A673 (cell line): ENCODE measurements at regions of chr9 and their contacts with region 1.

Region 1: GRCh38 chr9:113785334-113785733 is 90.8 kb upstream of the ZNF618 start:
- DNase-seq: no peak
- H3K4me3 ChIP-seq: no peak overlapping the region
- H3K27ac ChIP-seq: no peak overlapping the region
- H3K4me1 ChIP-seq: peaks cover 3% of the 10 kb centered on the region
- H3K27me3 ChIP-seq: no peaks in the 10 kb centered on the region
- CTCF ChIP-seq: no peak

Region 2: GRCh38 chr9:113492343-113493212 is 292.8 kb before region 1 on chr9:
- CTCF ChIA-PET with region 1: no interaction called
- POLR2A ChIA-PET with region 1: no interaction called
- intact Hi-C with region 1: no loop called
- DNase-seq: peak; percentile 96
- H3K4me3 ChIP-seq: peak overlapping the region; percentile 7
- H3K27ac ChIP-seq: peak overlapping the region; percentile 49
- H3K4me1 ChIP-seq: peaks cover 26% of the 10 kb centered on the region
- H3K27me3 ChIP-seq: no peaks in the 10 kb centered on the region
- CTCF ChIP-seq: no peak

Region 3: GRCh38 chr9:114108016-114108833 is 322.9 kb after region 1 on chr9:
- CTCF ChIA-PET with region 1: no interaction called
- POLR2A ChIA-PET with region 1: no interaction called
- intact Hi-C with region 1: no loop called
- DNase-seq: peak; percentile 75
- H3K4me3 ChIP-seq: no peak overlapping the region
- H3K27ac ChIP-seq: no peak overlapping the region
- H3K4me1 ChIP-seq: no peaks in the 10 kb centered on the region
- H3K27me3 ChIP-seq: peaks cover 41% of the 10 kb centered on the region
- CTCF ChIP-seq: peak; percentile 93

Region 4: DNA sequence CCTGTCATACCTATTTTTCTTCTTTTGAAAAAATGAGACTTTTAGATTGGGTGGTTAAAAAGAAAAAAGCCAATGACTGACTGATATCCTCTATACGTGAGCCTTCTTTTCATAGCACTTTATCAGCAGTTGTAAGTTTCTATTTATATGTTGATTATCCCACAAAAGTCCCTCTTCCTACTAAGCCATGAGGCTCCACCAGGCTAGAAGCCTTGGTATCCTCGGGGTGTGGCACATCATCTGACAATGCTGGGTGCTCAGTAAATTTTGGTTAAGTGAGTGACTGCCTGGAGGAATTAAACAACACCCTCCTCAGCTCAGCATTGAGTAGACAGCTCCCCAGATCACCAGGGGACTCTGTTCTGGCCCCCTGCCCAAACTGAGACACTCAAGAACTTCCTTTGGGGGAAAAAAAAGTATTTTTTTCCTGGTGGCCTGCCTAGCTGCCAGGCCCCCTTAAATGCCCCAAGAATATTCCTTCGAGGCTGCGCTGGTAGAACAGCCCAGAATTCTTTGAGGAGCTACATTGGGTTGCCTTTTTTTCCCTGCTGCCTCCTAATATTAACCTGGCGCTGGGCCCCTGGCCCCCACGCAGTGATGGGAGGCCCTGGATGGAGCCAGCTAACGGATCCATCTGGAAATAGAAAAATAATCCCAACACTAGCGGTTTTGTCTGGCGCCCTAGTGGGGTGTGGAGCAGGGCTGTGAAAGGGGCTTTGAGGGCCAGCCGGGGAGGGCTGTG is 346.6 kb after region 1 on chr9:
- CTCF ChIA-PET with region 1: interaction called, 11 read pairs
- POLR2A ChIA-PET with region 1: no interaction called
- intact Hi-C with region 1: no loop called
- DNase-seq: no peak
- H3K4me3 ChIP-seq: no peak overlapping the region
- H3K27ac ChIP-seq: no peak overlapping the region
- H3K4me1 ChIP-seq: no peaks in the 10 kb centered on the region
- H3K27me3 ChIP-seq: peaks cover 3% of the 10 kb centered on the region
- CTCF ChIP-seq: no peak